ENCODE measurements at regions of chr14 and their contacts with region 1.

Region 1: DNA sequence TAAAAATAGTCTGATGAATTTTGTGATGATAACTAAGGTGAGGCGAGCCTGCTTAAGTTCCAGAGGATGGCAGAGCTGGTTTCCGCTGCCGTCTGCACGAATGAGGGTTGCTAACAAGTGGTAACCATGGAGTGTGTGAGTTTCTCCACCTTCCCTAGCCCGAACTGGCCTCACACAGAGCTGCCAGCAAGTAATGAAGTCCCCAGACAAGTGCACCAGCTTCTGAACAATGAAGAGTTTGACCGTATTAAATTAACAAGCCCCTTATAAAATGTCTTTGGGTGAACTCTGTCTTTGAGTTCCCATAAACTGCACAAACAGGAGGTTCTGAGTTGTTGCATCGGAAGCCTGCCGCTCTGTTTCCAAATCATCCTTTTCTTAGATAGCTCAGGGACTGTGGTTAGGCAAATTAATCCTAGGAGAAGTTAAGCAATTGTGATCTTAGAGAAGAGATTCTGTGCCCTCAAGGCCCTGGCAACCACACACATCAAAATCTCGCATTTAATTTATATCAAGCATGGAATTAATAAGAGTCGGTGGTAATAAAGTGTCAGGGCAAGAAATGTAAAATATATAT is 274.1 kb upstream of the DAAM1 start:
- DNase-seq: no peak
- H3K4me3 ChIP-seq: no peak overlapping the region
- CTCF ChIP-seq: no peak
- POLR2A ChIP-seq: no peak

Region 2: GRCh38 chr14:59849411-59850130 is 935.2 kb after region 1 on chr14:
- intact Hi-C with region 1: loop called (anchors 5 kb)
- DNase-seq: no peak
- H3K4me3 ChIP-seq: no peak overlapping the region
- CTCF ChIP-seq: no peak
- POLR2A ChIP-seq: no peak

Measured in lower leg skin (tissue), 4 donors.